ENCODE measurements at regions of chr11 and their contacts with region 1.

Region 1: GRCh38 chr11:119057000-119057769 is at the start of gene HYOU1:
- DNase-seq: peak; percentile 97 to 99 (median 98)
- ATAC-seq: peak; percentile 92
- H3K4me3 ChIP-seq: peak within 1 kb of the TSS; percentile 82
- H3K4me3 Mint-ChIP-seq: peak within 1 kb of the TSS; percentile 99
- H3K27ac ChIP-seq: peak within 1 kb of the TSS; percentile 83 to 84
- H3K27ac Mint-ChIP-seq: peak within 1 kb of the TSS; percentile 80
- H3K4me1 ChIP-seq: peaks cover 32% of the 10 kb centered on the region
- H3K4me1 Mint-ChIP-seq: peaks cover 36% of the 10 kb centered on the region
- H3K27me3 ChIP-seq: no peaks in the 10 kb centered on the region
- H3K27me3 Mint-ChIP-seq: no peaks in the 10 kb centered on the region
- CTCF ChIP-seq: peak; percentile 2
- total RNA-seq, gene HYOU1: 76.5 to 81.4 TPM

Region 2: DNA sequence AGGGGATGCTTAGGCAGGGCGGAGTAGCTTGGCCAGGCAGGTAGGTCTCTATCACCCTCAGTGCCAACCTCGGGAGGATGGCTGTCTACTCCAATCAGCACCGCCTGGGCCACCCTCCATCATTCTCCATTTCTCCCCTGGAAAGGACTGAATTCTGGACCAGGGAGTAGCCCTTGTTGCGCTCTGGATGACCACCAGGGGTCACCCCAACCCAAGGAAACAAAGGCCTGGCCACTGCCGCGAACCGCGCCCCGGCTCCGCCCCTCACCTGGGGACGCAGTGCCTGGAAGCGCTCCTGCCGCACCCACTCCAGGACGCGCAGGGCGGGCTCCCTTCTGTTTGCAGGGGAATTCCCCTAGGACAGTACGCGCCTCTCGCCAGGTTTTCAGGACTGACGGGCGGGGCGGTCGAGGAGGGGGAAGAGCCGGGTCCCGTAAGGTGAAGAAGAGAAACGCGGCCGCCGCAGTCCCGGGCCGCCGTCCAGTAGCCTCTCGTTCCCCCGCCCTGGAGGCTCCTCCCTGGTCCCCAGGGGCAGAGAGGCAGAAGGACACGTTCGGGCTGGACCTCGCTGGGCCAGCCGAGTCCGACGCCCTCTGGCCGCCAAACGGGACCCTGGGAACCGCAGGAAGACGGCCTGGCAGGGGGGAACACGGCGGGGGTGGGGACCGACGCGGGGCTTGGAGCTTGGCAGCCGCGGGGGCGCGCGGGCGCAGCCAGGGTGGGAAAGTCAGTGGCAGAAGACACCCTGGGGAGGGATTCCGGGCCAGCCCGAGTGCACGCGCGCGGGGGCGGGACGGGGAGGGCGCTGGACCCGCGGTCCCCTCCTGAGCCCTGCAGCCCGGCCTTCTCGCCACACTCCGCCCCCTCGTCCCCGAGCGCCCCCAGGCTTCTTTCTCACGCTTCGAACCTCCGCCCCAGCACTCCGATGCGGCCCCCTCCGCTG is 911.6 kb before region 1 on chr11:
- CTCF ChIA-PET with region 1: no interaction called
- POLR2A ChIA-PET with region 1: no interaction called
- intact Hi-C with region 1: no loop called
- DNase-seq: peak; percentile 76 to 95 (median 82)
- ATAC-seq: peak; percentile 93
- H3K4me3 ChIP-seq: peak overlapping the region; percentile 80
- H3K4me3 Mint-ChIP-seq: peak overlapping the region; percentile 84
- H3K27ac ChIP-seq: no peak overlapping the region
- H3K27ac Mint-ChIP-seq: no peak overlapping the region
- H3K4me1 ChIP-seq: peaks cover 16% of the 10 kb centered on the region
- H3K4me1 Mint-ChIP-seq: peaks cover 5% of the 10 kb centered on the region
- H3K27me3 ChIP-seq: peaks cover 18 to 60% of the 10 kb centered on the region in 2 experiments
- H3K27me3 Mint-ChIP-seq: peaks cover 81% of the 10 kb centered on the region
- CTCF ChIP-seq: peak; percentile 79

Region 3: DNA sequence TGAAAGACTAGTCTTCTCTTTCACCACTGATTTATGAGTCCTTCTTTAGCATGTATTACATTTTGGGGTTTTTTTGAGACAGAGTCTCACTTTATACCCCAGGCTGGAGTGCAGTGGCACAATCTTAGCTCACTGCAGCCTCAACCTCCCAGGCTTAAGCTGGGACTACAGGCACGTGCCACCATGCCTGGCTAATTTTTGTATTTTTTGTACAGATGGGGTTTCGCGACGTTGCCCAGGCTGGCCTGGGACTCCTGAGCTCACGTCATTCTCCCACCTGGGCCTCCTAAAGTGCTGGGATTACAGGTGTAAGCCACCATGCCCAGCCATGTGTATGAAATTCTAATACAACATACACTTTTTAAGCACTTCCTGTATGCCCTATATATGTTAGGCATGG is 199.8 kb before region 1 on chr11:
- CTCF ChIA-PET with region 1: no interaction called
- POLR2A ChIA-PET with region 1: no interaction called
- intact Hi-C with region 1: no loop called
- DNase-seq: no peak
- ATAC-seq: no peak
- H3K4me3 ChIP-seq: no peak overlapping the region
- H3K4me3 Mint-ChIP-seq: no peak overlapping the region
- H3K27ac ChIP-seq: no peak overlapping the region
- H3K27ac Mint-ChIP-seq: no peak overlapping the region
- H3K4me1 ChIP-seq: peaks cover 3% of the 10 kb centered on the region
- H3K4me1 Mint-ChIP-seq: peaks cover 19% of the 10 kb centered on the region
- H3K27me3 ChIP-seq: no peaks in the 10 kb centered on the region
- H3K27me3 Mint-ChIP-seq: no peaks in the 10 kb centered on the region
- CTCF ChIP-seq: no peak

Region 4: GRCh38 chr11:119030329-119031049 is 26.7 kb before region 1 on chr11 and contains the start of gene SLC37A4:
- CTCF ChIA-PET with region 1: interaction called, 8 read pairs
- POLR2A ChIA-PET with region 1: interaction called, 14 read pairs
- intact Hi-C with region 1: loop called in 1 of 2 experiments (anchors 2 kb)
- DNase-seq: peak; percentile 96 to 100 (median 99)
- ATAC-seq: peak; percentile 95
- H3K4me3 ChIP-seq: peak within 1 kb of the TSS; percentile 91
- H3K4me3 Mint-ChIP-seq: peak within 1 kb of the TSS; percentile 96
- H3K27ac ChIP-seq: peak within 1 kb of the TSS; percentile 73 to 74
- H3K27ac Mint-ChIP-seq: peak within 1 kb of the TSS; percentile 92
- H3K4me1 ChIP-seq: peaks cover 29% of the 10 kb centered on the region
- H3K4me1 Mint-ChIP-seq: peaks cover 22% of the 10 kb centered on the region
- H3K27me3 ChIP-seq: no peaks in the 10 kb centered on the region
- H3K27me3 Mint-ChIP-seq: no peaks in the 10 kb centered on the region
- CTCF ChIP-seq: peak; percentile 75
- total RNA-seq, gene SLC37A4: 5.2 to 6.6 TPM

Region 5: DNA sequence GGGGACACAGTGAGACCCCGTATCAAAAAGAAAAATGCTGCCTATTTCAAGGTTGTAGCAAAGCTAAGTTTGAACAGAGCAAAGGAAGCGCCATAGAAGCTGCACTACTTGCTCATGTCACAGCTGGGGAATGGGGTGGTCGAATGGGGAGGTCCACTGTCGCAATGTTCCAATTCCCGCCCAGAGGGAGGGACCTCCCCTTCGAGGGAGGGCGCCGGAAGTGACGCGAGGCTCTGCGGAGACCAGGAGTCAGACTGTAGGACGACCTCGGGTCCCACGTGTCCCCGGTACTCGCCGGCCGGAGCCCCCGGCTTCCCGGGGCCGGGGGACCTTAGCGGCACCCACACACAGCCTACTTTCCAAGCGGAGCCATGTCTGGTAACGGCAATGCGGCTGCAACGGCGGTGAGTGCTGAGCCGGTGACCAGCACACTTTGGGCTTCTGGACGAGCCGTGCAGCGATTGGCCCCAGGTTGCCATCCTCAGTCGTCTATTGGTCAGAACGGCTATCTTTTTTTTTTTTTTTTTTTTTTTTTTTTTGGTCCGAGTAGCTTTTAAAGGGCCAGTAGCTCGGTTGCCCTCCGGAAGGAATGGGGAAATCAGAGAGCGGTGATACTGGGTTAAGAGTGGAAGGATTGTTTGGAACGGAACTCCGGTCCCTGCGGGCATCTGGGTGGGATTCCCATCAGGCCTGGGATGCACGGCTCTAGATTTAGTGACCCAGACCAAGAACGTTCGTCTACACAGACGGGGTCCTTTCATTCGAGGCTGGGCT is 27.7 kb after region 1 on chr11 and contains the start of gene HMBS:
- CTCF ChIA-PET with region 1: no interaction called
- POLR2A ChIA-PET with region 1: interaction called, 9 read pairs
- intact Hi-C with region 1: loop called in 1 of 2 experiments (anchors 1 kb)
- DNase-seq: peak; percentile 70 to 96 (median 88)
- ATAC-seq: peak; percentile 94
- H3K4me3 ChIP-seq: peak within 1 kb of the TSS; percentile 79
- H3K4me3 Mint-ChIP-seq: peak within 1 kb of the TSS; percentile 92
- H3K27ac ChIP-seq: peak within 1 kb of the TSS; percentile 74 to 81
- H3K27ac Mint-ChIP-seq: peak within 1 kb of the TSS; percentile 88
- H3K4me1 ChIP-seq: peaks cover 26% of the 10 kb centered on the region
- H3K4me1 Mint-ChIP-seq: peaks cover 25% of the 10 kb centered on the region
- H3K27me3 ChIP-seq: no peaks in the 10 kb centered on the region
- H3K27me3 Mint-ChIP-seq: no peaks in the 10 kb centered on the region
- CTCF ChIP-seq: no peak
- total RNA-seq, gene HMBS: 3.4 to 4.1 TPM

Region 6: GRCh38 chr11:119258180-119258579 is 201.0 kb after region 1 on chr11:
- CTCF ChIA-PET with region 1: no interaction called
- POLR2A ChIA-PET with region 1: no interaction called
- intact Hi-C with region 1: no loop called
- DNase-seq: peak in 11 of 14 experiments; percentile 11 to 58 (median 34)
- ATAC-seq: peak; percentile 66
- H3K4me3 ChIP-seq: no peak overlapping the region
- H3K4me3 Mint-ChIP-seq: peak overlapping the region; percentile 78
- H3K27ac ChIP-seq: peak overlapping the region in 1 of 2 donors; percentile 43
- H3K27ac Mint-ChIP-seq: peak overlapping the region; percentile 82
- H3K4me1 ChIP-seq: peaks cover 29% of the 10 kb centered on the region
- H3K4me1 Mint-ChIP-seq: peaks cover 53% of the 10 kb centered on the region
- H3K27me3 ChIP-seq: no peaks in the 10 kb centered on the region
- H3K27me3 Mint-ChIP-seq: no peaks in the 10 kb centered on the region
- CTCF ChIP-seq: no peak